ENCODE measurements at regions of chr16 and their contacts with region 1.

Region 1: GRCh38 chr16:23105309-23105708 is 43.9 kb downstream of the USP31 start:
- DNase-seq: no peak
- H3K4me3 ChIP-seq: no peak overlapping the region
- H3K27me3 ChIP-seq: no peaks in the 10 kb centered on the region
- CTCF ChIP-seq: no peak

Region 2: GRCh38 chr16:23081675-23082119 is 23.6 kb before region 1 on chr16:
- CTCF ChIA-PET with region 1: interaction called, 3 read pairs
- POLR2A ChIA-PET with region 1: interaction called, 19 read pairs
- DNase-seq: peak; percentile 49
- H3K4me3 ChIP-seq: no peak overlapping the region
- H3K27me3 ChIP-seq: no peaks in the 10 kb centered on the region
- CTCF ChIP-seq: no peak